ENCODE measurements at regions of chr14 and their contacts with region 1.

Region 1: DNA sequence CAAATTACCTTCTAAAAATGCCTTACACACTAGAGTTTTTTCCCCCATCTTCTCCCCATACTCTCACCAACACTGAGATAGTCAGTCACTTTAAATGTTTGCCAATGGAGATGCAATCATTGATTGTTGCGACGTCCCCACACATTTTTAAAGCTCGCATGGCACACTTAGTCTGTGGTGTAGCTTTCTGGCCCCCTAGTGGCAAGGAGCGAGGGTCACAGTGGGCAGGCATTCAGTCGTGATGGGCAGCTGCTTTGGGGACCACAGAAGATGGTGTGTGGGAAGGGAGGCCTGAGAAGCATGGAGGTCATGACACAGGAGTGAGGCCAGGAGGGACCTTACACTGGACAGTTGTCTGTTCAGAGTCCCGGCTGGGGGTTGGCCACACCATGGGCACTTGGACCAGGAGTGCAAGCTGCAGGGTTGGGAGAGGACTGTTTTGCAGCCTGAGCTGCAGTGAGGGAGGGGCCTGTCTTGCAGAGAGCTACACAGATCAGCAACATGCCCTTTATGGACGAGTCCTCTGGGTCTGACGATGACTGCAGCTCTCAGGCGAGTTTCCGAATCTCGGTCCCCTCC is 28.7 kb downstream of the PIGH start:
- DNase-seq: peak; percentile 57 to 66 (median 62)
- H3K4me3 ChIP-seq: no peak overlapping the region
- H3K4me3 Mint-ChIP-seq: no peak overlapping the region
- H3K27ac ChIP-seq: no peak overlapping the region
- H3K27ac Mint-ChIP-seq: no peak overlapping the region
- H3K4me1 ChIP-seq: no peaks in the 10 kb centered on the region
- H3K4me1 Mint-ChIP-seq: peaks cover 0 to 4% (median 3%) of the 10 kb centered on the region in 4 donors
- H3K27me3 ChIP-seq: no peaks in the 10 kb centered on the region
- H3K27me3 Mint-ChIP-seq: peaks cover 5 to 11% of the 10 kb centered on the region in 2 donors

Region 2: DNA sequence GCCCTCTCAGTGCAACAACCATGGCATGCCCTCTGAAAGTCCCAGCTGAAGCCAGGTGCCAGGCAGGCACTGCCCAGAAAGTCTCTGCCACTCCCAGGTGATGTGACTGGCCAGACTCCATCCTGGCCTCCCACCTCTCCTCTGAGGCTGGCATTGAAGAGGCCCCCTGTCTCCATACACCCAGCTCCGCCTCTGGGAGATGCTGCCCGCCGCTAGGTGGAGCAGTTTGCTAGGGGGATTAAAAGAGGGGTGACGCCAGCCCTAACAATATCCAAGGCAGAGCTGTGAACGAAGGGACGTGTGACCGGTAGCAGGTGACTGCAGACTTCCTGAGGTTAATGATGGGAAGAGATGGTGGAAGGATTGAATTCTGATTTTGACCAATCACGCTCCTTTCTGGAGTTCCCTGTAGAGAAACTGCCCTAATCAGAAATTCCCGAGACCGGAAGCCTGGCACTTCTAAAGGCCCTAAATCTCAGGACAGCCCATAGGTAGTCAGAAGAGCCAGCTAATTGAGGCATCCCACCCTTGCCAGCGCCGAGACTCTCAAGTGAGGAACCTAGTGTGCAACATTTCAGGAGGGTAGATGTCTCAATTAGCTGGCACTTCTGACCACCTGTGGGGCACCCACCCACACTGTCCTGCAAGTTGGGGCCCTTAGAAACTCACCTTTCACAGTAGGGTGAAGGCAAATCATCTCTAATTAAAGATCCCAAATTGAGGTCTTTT is 151.1 kb before region 1 on chr14:
- CTCF ChIA-PET with region 1: interaction called, 324 read pairs
- POLR2A ChIA-PET with region 1: no interaction called
- intact Hi-C with region 1: no loop called
- DNase-seq: peak in 4 of 5 donors; percentile 8 to 19 (median 11)
- H3K4me3 ChIP-seq: no peak overlapping the region
- H3K4me3 Mint-ChIP-seq: no peak overlapping the region
- H3K27ac ChIP-seq: no peak overlapping the region
- H3K27ac Mint-ChIP-seq: no peak overlapping the region
- H3K4me1 ChIP-seq: no peaks in the 10 kb centered on the region
- H3K4me1 Mint-ChIP-seq: no peaks in the 10 kb centered on the region
- H3K27me3 ChIP-seq: no peaks in the 10 kb centered on the region
- H3K27me3 Mint-ChIP-seq: peaks cover 2 to 4% of the 10 kb centered on the region in 2 donors

Region 3: DNA sequence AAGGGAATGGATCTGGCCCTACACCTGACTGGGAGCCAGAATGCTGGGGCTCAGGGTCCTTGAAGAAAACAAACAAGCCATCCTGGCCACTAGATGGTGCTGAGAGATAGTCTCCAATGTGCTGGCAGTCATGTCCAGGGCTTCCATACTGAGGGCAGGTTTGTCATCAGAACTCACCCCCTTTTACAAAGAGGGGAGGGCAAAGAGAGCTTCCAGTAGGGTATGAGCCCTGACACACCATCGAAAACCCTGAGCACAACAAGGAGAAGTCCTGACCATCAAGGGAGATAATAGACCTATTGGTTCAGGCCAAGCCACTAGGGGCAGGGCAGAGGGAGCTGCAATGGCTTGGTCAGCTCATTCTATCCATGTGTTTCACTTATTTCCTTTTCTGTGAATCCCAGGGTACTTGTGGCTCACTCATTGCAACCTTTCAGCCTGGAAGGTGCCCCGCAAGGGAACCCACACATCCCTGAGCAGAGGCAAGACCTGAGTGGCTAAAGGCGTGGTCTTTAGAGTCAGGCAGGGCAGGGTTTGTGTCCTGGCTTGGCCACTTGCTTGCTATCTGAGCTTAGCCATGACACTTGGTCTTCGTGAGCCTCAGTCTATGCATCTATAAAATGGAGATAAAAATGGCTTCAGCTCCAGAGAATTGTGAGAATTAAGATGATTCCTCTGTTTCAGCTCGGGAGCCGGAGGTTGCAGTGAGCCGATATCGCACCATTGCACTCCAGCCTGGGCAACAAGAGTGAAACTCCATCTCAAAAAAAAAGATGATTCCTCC is 44.5 kb before region 1 on chr14:
- CTCF ChIA-PET with region 1: interaction called, 59 read pairs
- POLR2A ChIA-PET with region 1: no interaction called
- intact Hi-C with region 1: loop called (anchors 1 kb)
- DNase-seq: peak; percentile 30 to 47 (median 31)
- H3K4me3 ChIP-seq: no peak overlapping the region
- H3K4me3 Mint-ChIP-seq: no peak overlapping the region
- H3K27ac ChIP-seq: no peak overlapping the region
- H3K27ac Mint-ChIP-seq: no peak overlapping the region
- H3K4me1 ChIP-seq: no peaks in the 10 kb centered on the region
- H3K4me1 Mint-ChIP-seq: peaks cover 2 to 9% (median 5%) of the 10 kb centered on the region in 4 donors
- H3K27me3 ChIP-seq: peaks cover 15% of the 10 kb centered on the region
- H3K27me3 Mint-ChIP-seq: peaks cover 13 to 44% of the 10 kb centered on the region in 2 donors

Region 4: DNA sequence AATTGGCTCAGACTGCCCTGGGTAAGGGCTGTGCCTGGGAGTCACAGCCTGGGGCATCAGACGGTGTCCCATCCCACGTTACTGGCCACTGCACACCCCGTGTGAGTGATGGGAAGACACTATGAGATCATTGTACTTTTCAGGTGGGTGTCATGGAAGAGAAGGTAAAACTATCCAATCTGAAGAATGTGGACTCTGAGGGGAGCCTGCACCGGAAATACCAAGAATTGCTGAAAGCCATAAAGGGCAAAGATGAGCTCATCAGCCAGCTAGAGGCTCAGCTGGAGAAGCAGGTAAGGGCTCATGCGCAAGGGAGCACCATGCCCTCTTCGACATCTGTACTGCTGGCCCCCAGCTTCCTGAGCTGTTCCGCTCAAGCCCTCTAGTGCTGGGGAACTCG is 14.2 kb before region 1 on chr14:
- CTCF ChIA-PET with region 1: interaction called, 13 read pairs
- POLR2A ChIA-PET with region 1: interaction called, 4 read pairs
- intact Hi-C with region 1: no loop called
- DNase-seq: no peak
- H3K4me3 ChIP-seq: no peak overlapping the region
- H3K4me3 Mint-ChIP-seq: no peak overlapping the region
- H3K27ac ChIP-seq: no peak overlapping the region
- H3K27ac Mint-ChIP-seq: no peak overlapping the region
- H3K4me1 ChIP-seq: no peaks in the 10 kb centered on the region
- H3K4me1 Mint-ChIP-seq: no peaks in the 10 kb centered on the region
- H3K27me3 ChIP-seq: no peaks in the 10 kb centered on the region
- H3K27me3 Mint-ChIP-seq: peaks cover 0 to 4% of the 10 kb centered on the region in 2 donors

Measured in CD4-positive, alpha-beta memory T cell (primary cell).